ENCODE measurements at regions of chr16 and their contacts with region 1.

Region 1: DNA sequence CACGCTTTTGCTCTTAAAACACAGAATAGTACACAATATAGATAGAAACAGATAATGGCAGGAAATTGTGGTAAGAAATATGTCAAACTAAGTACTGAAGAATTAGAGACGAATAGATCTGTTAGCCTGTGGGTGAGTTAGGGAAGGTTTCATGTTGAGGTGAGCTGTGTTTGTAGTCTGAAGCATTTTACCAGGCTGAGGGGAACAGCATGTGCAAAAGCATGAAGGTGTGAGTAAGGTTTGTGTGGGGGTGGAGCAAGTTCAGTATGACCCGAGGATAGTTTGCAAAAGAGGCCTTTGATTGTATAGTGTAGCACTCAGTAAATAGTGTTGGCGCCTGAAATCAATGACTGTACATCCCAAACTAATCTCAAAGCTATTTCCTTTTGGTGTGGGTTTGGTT is 13.8 kb downstream of the IGSF6 start:
- DNase-seq: peak in 1 of 2 experiments; percentile 88
- H3K4me3 ChIP-seq: no peak overlapping the region
- H3K27ac ChIP-seq: peak overlapping the region; percentile 75
- H3K4me1 ChIP-seq: peaks cover 53% of the 10 kb centered on the region
- H3K27me3 ChIP-seq: no peaks in the 10 kb centered on the region
- CTCF ChIP-seq: no peak

Region 2: GRCh38 chr16:21590287-21590686 is 48.3 kb before region 1 on chr16:
- CTCF ChIA-PET with region 1: interaction called, 3 read pairs
- POLR2A ChIA-PET with region 1: interaction called, 18 read pairs
- intact Hi-C with region 1: loop called (anchors 5 kb)
- DNase-seq: peak; percentile 14 to 94
- H3K4me3 ChIP-seq: peak overlapping the region; percentile 41; the same call in 1 of the 2 replicates
- H3K27ac ChIP-seq: peak overlapping the region; percentile 84
- H3K4me1 ChIP-seq: peaks cover 38% of the 10 kb centered on the region
- H3K27me3 ChIP-seq: no peaks in the 10 kb centered on the region
- CTCF ChIP-seq: no peak

Region 3: GRCh38 chr16:21599233-21600030 is 39.1 kb before region 1 on chr16 and contains the start of gene METTL9:
- CTCF ChIA-PET with region 1: no interaction called
- POLR2A ChIA-PET with region 1: no interaction called
- intact Hi-C with region 1: loop called (anchors 5 kb)
- DNase-seq: peak; percentile 82 to 96
- H3K4me3 ChIP-seq: peak within 1 kb of the TSS; percentile 74
- H3K27ac ChIP-seq: peak within 1 kb of the TSS; percentile 58
- H3K4me1 ChIP-seq: peaks cover 41% of the 10 kb centered on the region
- H3K27me3 ChIP-seq: no peaks in the 10 kb centered on the region
- CTCF ChIP-seq: no peak
- total RNA-seq, gene METTL9: 136 and 151 TPM in 2 replicates

Measured in PC-9 (cell line).